ENCODE measurements at regions of chr5 and their contacts with region 1.

Region 1: GRCh38 chr5:77129391-77129990 is 42.4 kb upstream of the ZBED3 start:
- DNase-seq: peak; percentile 70
- ATAC-seq: peak; percentile 97
- H3K4me3 Mint-ChIP-seq: no peak overlapping the region
- H3K27ac Mint-ChIP-seq: no peak overlapping the region
- H3K4me1 Mint-ChIP-seq: no peaks in the 10 kb centered on the region
- H3K27me3 Mint-ChIP-seq: no peaks in the 10 kb centered on the region
- CTCF ChIP-seq: no peak

Region 2: GRCh38 chr5:77437194-77437593 is 307.7 kb after region 1 on chr5:
- CTCF ChIA-PET with region 1: interaction called, 10 read pairs
- POLR2A ChIA-PET with region 1: no interaction called
- DNase-seq: no peak
- ATAC-seq: peak; percentile 57; the same call in 1 of the 2 replicates
- H3K4me3 Mint-ChIP-seq: no peak overlapping the region
- H3K27ac Mint-ChIP-seq: no peak overlapping the region
- H3K4me1 Mint-ChIP-seq: no peaks in the 10 kb centered on the region
- H3K27me3 Mint-ChIP-seq: no peaks in the 10 kb centered on the region
- CTCF ChIP-seq: no peak

Region 3: GRCh38 chr5:77491783-77492652 is 362.5 kb after region 1 on chr5 and contains the start of gene WDR41:
- CTCF ChIA-PET with region 1: interaction called, 13 read pairs
- POLR2A ChIA-PET with region 1: no interaction called
- DNase-seq: peak; percentile 86
- ATAC-seq: peak; percentile 92
- H3K4me3 Mint-ChIP-seq: peak within 1 kb of the TSS; percentile 89
- H3K27ac Mint-ChIP-seq: peak within 1 kb of the TSS; percentile 57; the same call in 1 of the 2 replicates
- H3K4me1 Mint-ChIP-seq: peaks cover 13% of the 10 kb centered on the region
- H3K27me3 Mint-ChIP-seq: peaks cover 35% of the 10 kb centered on the region
- CTCF ChIP-seq: peak; percentile 78
- total RNA-seq, gene WDR41: 39.8 to 44.2 TPM (median 42.3 TPM) in 3 replicates